CD14-positive monocyte (primary cell): ENCODE measurements at regions of chr12 and their contacts with region 1.

Region 1: GRCh38 chr12:31650927-31651326 is 8.6 kb upstream of the ETFBKMT start:
- DNase-seq: no peak
- H3K4me3 ChIP-seq: no peak overlapping the region
- H3K4me3 Mint-ChIP-seq: no peak overlapping the region
- H3K27ac ChIP-seq: no peak overlapping the region
- H3K27ac Mint-ChIP-seq: peak overlapping the region in 1 of 7 donors; percentile 35
- H3K4me1 ChIP-seq: peaks cover 25% of the 10 kb centered on the region in 2 donors
- H3K4me1 Mint-ChIP-seq: peaks cover 30% of the 10 kb centered on the region
- H3K27me3 ChIP-seq: no peaks in the 10 kb centered on the region
- H3K27me3 Mint-ChIP-seq: peaks cover 0 to 3% (median 0%) of the 10 kb centered on the region in 3 donors
- CTCF ChIP-seq: no peak

Region 2: GRCh38 chr12:31749024-31749704 is 98.2 kb after region 1 on chr12:
- intact Hi-C with region 1: no loop called
- DNase-seq: peak; percentile 98 to 100 (median 100)
- H3K4me3 ChIP-seq: peak overlapping the region in 1 of 3 experiments; percentile 31
- H3K4me3 Mint-ChIP-seq: no peak overlapping the region
- H3K27ac ChIP-seq: peak overlapping the region; percentile 93 to 96
- H3K27ac Mint-ChIP-seq: peak overlapping the region; percentile 97 to 99 (median 99)
- H3K4me1 ChIP-seq: peaks cover 72 to 84% of the 10 kb centered on the region in 2 donors
- H3K4me1 Mint-ChIP-seq: peaks cover 73% of the 10 kb centered on the region
- H3K27me3 ChIP-seq: no peaks in the 10 kb centered on the region
- H3K27me3 Mint-ChIP-seq: peaks cover 0 to 2% (median 0%) of the 10 kb centered on the region in 3 donors
- CTCF ChIP-seq: no peak

Region 3: GRCh38 chr12:32106517-32107358 is 455.8 kb after region 1 on chr12 and contains the start of gene BICD1:
- intact Hi-C with region 1: loop called in 1 of 2 experiments (anchors 5 kb)
- DNase-seq: peak; percentile 49 to 54 (median 52)
- H3K4me3 ChIP-seq: peak within 1 kb of the TSS; percentile 55 to 87 (median 67)
- H3K4me3 Mint-ChIP-seq: peak within 1 kb of the TSS; percentile 95 to 97
- H3K27ac ChIP-seq: peak within 1 kb of the TSS in 1 of 2 donors; percentile 67
- H3K27ac Mint-ChIP-seq: peak within 1 kb of the TSS in 5 of 7 donors; percentile 5 to 87 (median 70)
- H3K4me1 ChIP-seq: peaks cover 16 to 19% of the 10 kb centered on the region in 2 donors
- H3K4me1 Mint-ChIP-seq: peaks cover 24% of the 10 kb centered on the region
- H3K27me3 ChIP-seq: peaks cover 0 to 2% of the 10 kb centered on the region in 2 donors
- H3K27me3 Mint-ChIP-seq: peaks cover 2 to 13% (median 9%) of the 10 kb centered on the region in 3 donors
- CTCF ChIP-seq: no peak
- polyA plus RNA-seq, gene BICD1: 0.55 to 2.1 (median 1.6) TPM

Region 4: GRCh38 chr12:32302218-32303173 is 651.6 kb after region 1 on chr12:
- intact Hi-C with region 1: loop called in 1 of 2 experiments (anchors 5 kb)
- DNase-seq: peak in 1 of 3 donors; percentile 3
- H3K4me3 ChIP-seq: no peak overlapping the region
- H3K4me3 Mint-ChIP-seq: no peak overlapping the region
- H3K27ac ChIP-seq: no peak overlapping the region
- H3K27ac Mint-ChIP-seq: peak overlapping the region in 1 of 7 donors; percentile 10
- H3K4me1 ChIP-seq: no peaks in the 10 kb centered on the region
- H3K4me1 Mint-ChIP-seq: peaks cover 5% of the 10 kb centered on the region
- H3K27me3 ChIP-seq: no peaks in the 10 kb centered on the region
- H3K27me3 Mint-ChIP-seq: peaks cover 0 to 3% (median 0%) of the 10 kb centered on the region in 3 donors
- CTCF ChIP-seq: no peak

Region 5: DNA sequence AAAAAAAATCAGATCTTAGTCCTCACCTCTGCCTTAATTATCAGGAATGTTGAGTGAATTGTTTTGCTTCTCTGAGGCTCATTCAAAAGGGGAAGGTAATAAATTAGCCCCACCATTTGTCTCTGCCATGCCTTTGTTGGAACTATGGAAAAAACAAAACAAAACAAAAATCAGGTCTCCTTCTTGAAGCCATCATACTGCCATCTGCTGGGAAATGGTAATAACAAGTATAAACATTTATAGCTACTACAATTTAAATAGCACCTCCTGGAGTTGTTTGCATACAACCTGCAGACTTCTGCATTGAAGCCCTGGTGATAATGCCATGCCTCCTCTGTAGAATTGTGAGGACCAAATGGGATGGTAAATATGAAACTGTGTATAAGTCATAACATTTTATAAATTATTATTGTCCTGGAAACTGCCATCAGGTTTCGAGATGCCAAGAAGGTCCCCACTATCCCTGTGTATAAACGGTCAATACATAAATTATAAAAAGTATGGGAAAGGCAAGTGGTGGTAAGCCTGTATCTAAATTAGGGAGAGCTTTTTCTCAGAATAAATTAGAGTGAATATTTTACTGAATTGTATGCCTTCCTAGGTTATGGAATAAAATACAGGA is 661.2 kb after region 1 on chr12:
- intact Hi-C with region 1: loop called (anchors 5 kb)
- DNase-seq: peak; percentile 23 to 30 (median 29)
- H3K4me3 ChIP-seq: no peak overlapping the region
- H3K4me3 Mint-ChIP-seq: no peak overlapping the region
- H3K27ac ChIP-seq: no peak overlapping the region
- H3K27ac Mint-ChIP-seq: no peak overlapping the region
- H3K4me1 ChIP-seq: no peaks in the 10 kb centered on the region
- H3K4me1 Mint-ChIP-seq: peaks cover 2% of the 10 kb centered on the region
- H3K27me3 ChIP-seq: no peaks in the 10 kb centered on the region
- H3K27me3 Mint-ChIP-seq: no peaks in the 10 kb centered on the region
- CTCF ChIP-seq: peak; percentile 61